HepG2 (cell line): ENCODE measurements at regions of chr7 and their contacts with region 1.

Region 1: DNA sequence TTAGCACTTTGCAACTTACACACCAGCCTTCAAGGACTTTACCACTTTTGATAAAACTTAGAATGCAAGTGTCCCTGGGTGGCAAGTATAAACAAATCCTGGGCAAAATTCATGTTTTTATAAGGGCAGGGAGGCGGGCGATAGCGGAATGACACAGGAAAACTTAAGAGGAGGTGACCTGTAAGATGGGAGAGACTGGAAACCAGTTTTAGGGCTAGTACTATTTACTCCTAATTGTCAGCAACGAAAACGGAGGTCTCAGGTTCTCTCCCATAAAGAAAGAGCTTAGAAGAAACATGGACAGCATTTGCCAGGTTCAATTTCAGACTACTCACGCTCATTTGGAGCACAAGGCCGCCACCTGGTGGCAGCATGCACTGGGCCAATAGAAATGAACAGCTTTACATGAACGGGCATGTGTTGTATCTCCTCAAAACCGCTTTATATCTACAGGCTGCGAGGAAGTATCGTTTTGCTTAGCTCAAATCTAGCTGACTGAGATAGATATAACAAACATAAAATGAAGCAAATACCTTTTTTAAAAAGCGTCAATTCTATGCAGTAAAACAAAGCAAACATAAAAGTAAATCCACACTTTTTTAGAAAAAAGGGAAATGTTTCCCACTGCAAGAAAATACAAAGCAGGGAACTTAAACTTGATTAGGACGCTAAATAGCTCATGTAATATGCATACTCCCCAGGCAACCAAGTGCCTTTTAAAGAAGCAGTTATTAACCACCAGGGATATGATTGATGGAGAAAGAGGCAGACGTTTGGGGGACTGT is 37.6 kb upstream of the SVOPL start:
- DNase-seq: peak; percentile 81
- ATAC-seq: peak; percentile 96
- H3K4me3 ChIP-seq: peak overlapping the region in 1 of 3 experiments; percentile 7; a peak in 1 of 6 replicates
- H3K27ac ChIP-seq: no peak overlapping the region
- H3K4me1 ChIP-seq: peaks cover 20% of the 10 kb centered on the region
- H3K27me3 ChIP-seq: no peaks in the 10 kb centered on the region
- CTCF ChIP-seq: peak; percentile 95
- EP300 ChIP-seq: no peak
- POLR2A ChIP-seq: no peak
- RAD21 ChIP-seq: peak; percentile 89

Region 2: GRCh38 chr7:137898839-137899721 is 839.7 kb before region 1 on chr7:
- CTCF ChIA-PET with region 1: no interaction called
- POLR2A ChIA-PET with region 1: no interaction called
- in situ Hi-C with region 1: no loop called
- intact Hi-C with region 1: loop called (anchors 10 kb)
- DNase-seq: peak; percentile 58
- ATAC-seq: peak; percentile 92
- H3K4me3 ChIP-seq: no peak overlapping the region
- H3K27ac ChIP-seq: peak overlapping the region; percentile 25
- H3K4me1 ChIP-seq: peaks cover 42% of the 10 kb centered on the region
- H3K27me3 ChIP-seq: no peaks in the 10 kb centered on the region
- CTCF ChIP-seq: peak; percentile 97
- EP300 ChIP-seq: no peak
- POLR2A ChIP-seq: no peak
- RAD21 ChIP-seq: peak; percentile 79

Region 3: DNA sequence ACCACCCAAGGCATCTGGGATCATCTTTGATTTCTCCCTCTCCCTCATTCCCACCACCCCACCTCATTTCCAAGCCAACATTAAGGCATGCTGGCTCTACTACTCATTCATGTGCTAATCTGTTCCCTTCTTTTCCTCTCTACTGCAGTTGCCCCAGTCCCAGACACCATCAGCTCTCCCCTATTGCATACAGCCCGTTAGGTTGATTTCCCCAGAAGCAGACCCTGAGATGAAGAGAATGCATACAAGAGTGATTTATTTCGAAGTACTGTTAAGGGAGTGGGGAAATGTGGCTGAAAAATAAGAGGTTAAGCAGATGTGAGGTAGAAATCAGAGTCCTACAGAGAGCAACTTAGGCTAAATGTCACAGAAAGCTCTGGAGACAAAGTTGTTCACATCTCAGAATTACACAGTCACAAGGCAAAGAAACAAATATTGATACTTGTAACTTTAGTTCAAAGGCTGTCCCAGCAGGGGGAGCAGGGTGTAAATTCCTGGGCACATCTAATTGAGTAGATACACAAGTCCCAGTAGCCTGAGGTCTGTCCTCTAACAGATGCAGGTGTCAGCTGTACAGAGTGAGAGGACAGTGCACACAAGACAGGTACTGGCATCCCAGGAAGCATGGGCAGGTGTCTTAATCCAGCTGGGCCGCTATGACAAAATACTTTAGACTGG is 641.5 kb before region 1 on chr7:
- CTCF ChIA-PET with region 1: no interaction called
- POLR2A ChIA-PET with region 1: no interaction called
- in situ Hi-C with region 1: no loop called
- intact Hi-C with region 1: loop called (anchors 10 kb)
- DNase-seq: peak; percentile 79
- ATAC-seq: peak; percentile 99
- H3K4me3 ChIP-seq: no peak overlapping the region
- H3K27ac ChIP-seq: peak overlapping the region; percentile 51
- H3K4me1 ChIP-seq: peaks cover 44% of the 10 kb centered on the region
- H3K27me3 ChIP-seq: no peaks in the 10 kb centered on the region
- CTCF ChIP-seq: peak; percentile 76
- EP300 ChIP-seq: peak in 1 of 2 experiments; percentile 34; a peak in 1 of 4 replicates
- POLR2A ChIP-seq: no peak
- RAD21 ChIP-seq: peak; percentile 60

Region 4: GRCh38 chr7:138449580-138449979 is 289.2 kb before region 1 on chr7:
- CTCF ChIA-PET with region 1: no interaction called
- POLR2A ChIA-PET with region 1: interaction called, 4 read pairs
- in situ Hi-C with region 1: loop called (anchors 25 kb)
- intact Hi-C with region 1: no loop called
- DNase-seq: no peak
- ATAC-seq: no peak
- H3K4me3 ChIP-seq: no peak overlapping the region
- H3K27ac ChIP-seq: no peak overlapping the region
- H3K4me1 ChIP-seq: 0 out of 2 replicates have a peak, but pooled peaks cover 7% of the 10 kb centered on the region
- H3K27me3 ChIP-seq: no peaks in the 10 kb centered on the region
- CTCF ChIP-seq: peak; percentile 33; the same call in 1 of the 2 replicates
- EP300 ChIP-seq: no peak
- POLR2A ChIP-seq: no peak
- RAD21 ChIP-seq: 0 out of 2 replicates have a peak, but pooled peaks have one; percentile 11

Region 5: DNA sequence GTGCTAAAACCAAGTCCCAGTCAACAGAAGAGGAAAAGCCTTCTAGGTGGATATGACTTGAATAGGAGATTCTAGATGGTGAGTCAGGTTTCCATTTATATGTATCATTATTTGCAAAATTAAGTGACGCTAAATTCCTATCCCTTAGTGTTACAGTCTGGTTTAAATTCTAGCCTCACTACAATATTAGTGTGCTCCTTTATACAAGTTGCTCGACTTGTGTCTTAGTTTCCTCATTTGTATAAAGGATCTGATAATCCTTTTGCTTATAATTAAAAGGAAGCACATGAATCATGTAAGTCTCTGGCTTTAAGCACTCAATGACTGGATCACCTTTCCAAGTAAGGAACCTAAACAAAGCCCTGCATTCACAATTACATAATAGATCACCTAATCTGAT is 143.3 kb before region 1 on chr7:
- CTCF ChIA-PET with region 1: no interaction called
- POLR2A ChIA-PET with region 1: no interaction called
- in situ Hi-C with region 1: loop called (anchors 10 kb)
- intact Hi-C with region 1: loop called (anchors 5 kb)
- DNase-seq: no peak
- ATAC-seq: no peak
- H3K4me3 ChIP-seq: no peak overlapping the region
- H3K27ac ChIP-seq: no peak overlapping the region
- H3K4me1 ChIP-seq: no peaks in the 10 kb centered on the region
- H3K27me3 ChIP-seq: no peaks in the 10 kb centered on the region
- CTCF ChIP-seq: no peak
- EP300 ChIP-seq: no peak
- POLR2A ChIP-seq: no peak
- RAD21 ChIP-seq: no peak

Region 6: GRCh38 chr7:139043823-139044812 is 305.4 kb after region 1 on chr7:
- CTCF ChIA-PET with region 1: no interaction called
- POLR2A ChIA-PET with region 1: no interaction called
- in situ Hi-C with region 1: no loop called
- intact Hi-C with region 1: no loop called
- DNase-seq: peak; percentile 16
- ATAC-seq: no peak
- H3K4me3 ChIP-seq: no peak overlapping the region
- H3K27ac ChIP-seq: no peak overlapping the region
- H3K4me1 ChIP-seq: peaks cover 11% of the 10 kb centered on the region; the same call in 1 of the 2 replicates
- H3K27me3 ChIP-seq: no peaks in the 10 kb centered on the region
- CTCF ChIP-seq: no peak
- EP300 ChIP-seq: no peak
- POLR2A ChIP-seq: no peak
- RAD21 ChIP-seq: no peak